ENCODE measurements at regions of chr2 and their contacts with region 1.

Region 1: GRCh38 chr2:203814661-203815540 is 52.7 kb upstream of the CTLA4 start:
- DNase-seq: peak; percentile 53 to 76 (median 72)
- H3K4me3 ChIP-seq: peak overlapping the region in 1 of 2 donors; percentile 21
- H3K4me3 Mint-ChIP-seq: peak overlapping the region; percentile 57 to 86 (median 80)
- H3K27ac ChIP-seq: no peak overlapping the region
- H3K27ac Mint-ChIP-seq: peak overlapping the region; percentile 30 to 86 (median 74)
- H3K4me1 ChIP-seq: peaks cover 49% of the 10 kb centered on the region
- H3K4me1 Mint-ChIP-seq: peaks cover 20 to 54% (median 38%) of the 10 kb centered on the region in 4 donors
- H3K27me3 ChIP-seq: no peaks in the 10 kb centered on the region
- H3K27me3 Mint-ChIP-seq: no peaks in the 10 kb centered on the region

Region 2: DNA sequence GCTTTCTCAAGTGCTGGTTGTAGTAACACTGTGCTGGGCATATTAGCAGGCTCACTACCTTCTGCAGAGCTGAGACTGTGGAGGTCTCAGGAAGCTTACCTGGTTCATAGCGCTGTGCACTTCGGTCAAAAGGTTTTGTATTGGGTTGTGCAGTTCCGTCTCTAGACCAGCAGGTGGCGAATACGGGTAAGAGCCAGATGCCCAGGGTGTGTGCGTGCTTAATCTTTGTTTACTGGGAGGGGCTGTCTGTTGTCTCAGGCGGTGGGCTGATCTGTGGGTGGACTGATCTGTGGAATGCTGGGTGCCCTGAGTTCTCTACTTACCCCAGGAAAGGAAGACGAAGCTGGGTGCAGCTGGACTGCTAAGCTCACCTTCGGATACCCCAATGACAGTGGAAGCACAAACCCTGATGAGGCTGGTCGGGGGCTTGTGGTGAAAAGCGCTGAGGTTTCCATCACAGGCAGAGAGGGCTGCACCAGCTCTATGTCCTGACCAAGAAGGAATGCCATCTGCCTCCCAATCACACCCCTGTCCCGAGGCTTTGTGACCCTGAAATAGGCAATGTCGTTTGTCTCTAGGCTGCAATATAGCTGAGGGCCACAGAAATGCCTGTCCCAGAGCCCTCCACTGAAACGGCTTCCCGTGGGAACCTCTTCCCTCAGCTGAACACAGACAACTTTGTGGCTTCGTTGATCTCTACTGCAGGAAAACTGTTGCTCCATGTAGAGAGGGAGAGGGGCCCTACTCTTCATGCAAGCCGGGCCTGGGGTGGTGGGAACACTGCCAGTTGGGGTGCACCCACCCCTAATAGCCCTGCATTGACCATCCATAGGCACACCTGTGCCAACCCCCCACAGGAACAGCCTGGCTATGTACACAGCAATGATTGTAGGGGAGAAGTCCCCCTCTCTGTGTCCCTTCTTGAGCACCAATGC is 1226.0 kb before region 1 on chr2:
- CTCF ChIA-PET with region 1: interaction called, 8 read pairs
- POLR2A ChIA-PET with region 1: no interaction called
- intact Hi-C with region 1: loop called (anchors 2 kb)
- DNase-seq: peak; percentile 71 to 77 (median 72)
- H3K4me3 ChIP-seq: no peak overlapping the region
- H3K4me3 Mint-ChIP-seq: peak overlapping the region in 2 of 8 donors; percentile 43 to 50
- H3K27ac ChIP-seq: no peak overlapping the region
- H3K27ac Mint-ChIP-seq: peak overlapping the region in 1 of 7 donors; percentile 4
- H3K4me1 ChIP-seq: peaks cover 5% of the 10 kb centered on the region
- H3K4me1 Mint-ChIP-seq: peaks cover 4 to 8% (median 7%) of the 10 kb centered on the region in 4 donors
- H3K27me3 ChIP-seq: no peaks in the 10 kb centered on the region
- H3K27me3 Mint-ChIP-seq: peaks cover 0 to 2% of the 10 kb centered on the region in 2 donors

Region 3: GRCh38 chr2:203453858-203454451 is 360.9 kb before region 1 on chr2:
- CTCF ChIA-PET with region 1: interaction called, 31 read pairs
- POLR2A ChIA-PET with region 1: no interaction called
- intact Hi-C with region 1: loop called (anchors 1 kb)
- DNase-seq: peak; percentile 33 to 44 (median 35)
- H3K4me3 ChIP-seq: no peak overlapping the region
- H3K4me3 Mint-ChIP-seq: no peak overlapping the region
- H3K27ac ChIP-seq: no peak overlapping the region
- H3K27ac Mint-ChIP-seq: no peak overlapping the region
- H3K4me1 ChIP-seq: no peaks in the 10 kb centered on the region
- H3K4me1 Mint-ChIP-seq: no peaks in the 10 kb centered on the region
- H3K27me3 ChIP-seq: no peaks in the 10 kb centered on the region
- H3K27me3 Mint-ChIP-seq: no peaks in the 10 kb centered on the region

Region 4: GRCh38 chr2:203650860-203651613 is 163.9 kb before region 1 on chr2:
- CTCF ChIA-PET with region 1: interaction called, 11 read pairs
- POLR2A ChIA-PET with region 1: no interaction called
- intact Hi-C with region 1: no loop called
- DNase-seq: peak in 4 of 5 donors; percentile 17 to 25 (median 20)
- H3K4me3 ChIP-seq: no peak overlapping the region
- H3K4me3 Mint-ChIP-seq: no peak overlapping the region
- H3K27ac ChIP-seq: no peak overlapping the region
- H3K27ac Mint-ChIP-seq: peak overlapping the region in 1 of 7 donors; percentile 66
- H3K4me1 ChIP-seq: no peaks in the 10 kb centered on the region
- H3K4me1 Mint-ChIP-seq: peaks cover 2 to 16% (median 8%) of the 10 kb centered on the region in 4 donors
- H3K27me3 ChIP-seq: no peaks in the 10 kb centered on the region
- H3K27me3 Mint-ChIP-seq: no peaks in the 10 kb centered on the region

Region 5: GRCh38 chr2:203740780-203741281 is 74.1 kb before region 1 on chr2:
- CTCF ChIA-PET with region 1: interaction called, 17 read pairs
- POLR2A ChIA-PET with region 1: interaction called, 27 read pairs
- intact Hi-C with region 1: no loop called
- DNase-seq: peak; percentile 78 to 88 (median 86)
- H3K4me3 ChIP-seq: peak overlapping the region in 1 of 2 donors; percentile 28
- H3K4me3 Mint-ChIP-seq: peak overlapping the region; percentile 17 to 86 (median 70)
- H3K27ac ChIP-seq: peak overlapping the region; percentile 66
- H3K27ac Mint-ChIP-seq: peak overlapping the region; percentile 81 to 99 (median 95)
- H3K4me1 ChIP-seq: peaks cover 94% of the 10 kb centered on the region
- H3K4me1 Mint-ChIP-seq: peaks cover 65 to 90% (median 79%) of the 10 kb centered on the region in 4 donors
- H3K27me3 ChIP-seq: no peaks in the 10 kb centered on the region
- H3K27me3 Mint-ChIP-seq: no peaks in the 10 kb centered on the region

Region 6: GRCh38 chr2:203804070-203804469 is 10.8 kb before region 1 on chr2:
- CTCF ChIA-PET with region 1: interaction called, 53 read pairs
- POLR2A ChIA-PET with region 1: interaction called, 17 read pairs
- intact Hi-C with region 1: no loop called
- DNase-seq: peak; percentile 36 to 57 (median 50)
- H3K4me3 ChIP-seq: no peak overlapping the region
- H3K4me3 Mint-ChIP-seq: peak overlapping the region; percentile 4 to 81 (median 70)
- H3K27ac ChIP-seq: no peak overlapping the region
- H3K27ac Mint-ChIP-seq: peak overlapping the region; percentile 25 to 95 (median 87)
- H3K4me1 ChIP-seq: peaks cover 51% of the 10 kb centered on the region
- H3K4me1 Mint-ChIP-seq: peaks cover 39 to 73% (median 62%) of the 10 kb centered on the region in 4 donors
- H3K27me3 ChIP-seq: no peaks in the 10 kb centered on the region
- H3K27me3 Mint-ChIP-seq: no peaks in the 10 kb centered on the region

Region 7: DNA sequence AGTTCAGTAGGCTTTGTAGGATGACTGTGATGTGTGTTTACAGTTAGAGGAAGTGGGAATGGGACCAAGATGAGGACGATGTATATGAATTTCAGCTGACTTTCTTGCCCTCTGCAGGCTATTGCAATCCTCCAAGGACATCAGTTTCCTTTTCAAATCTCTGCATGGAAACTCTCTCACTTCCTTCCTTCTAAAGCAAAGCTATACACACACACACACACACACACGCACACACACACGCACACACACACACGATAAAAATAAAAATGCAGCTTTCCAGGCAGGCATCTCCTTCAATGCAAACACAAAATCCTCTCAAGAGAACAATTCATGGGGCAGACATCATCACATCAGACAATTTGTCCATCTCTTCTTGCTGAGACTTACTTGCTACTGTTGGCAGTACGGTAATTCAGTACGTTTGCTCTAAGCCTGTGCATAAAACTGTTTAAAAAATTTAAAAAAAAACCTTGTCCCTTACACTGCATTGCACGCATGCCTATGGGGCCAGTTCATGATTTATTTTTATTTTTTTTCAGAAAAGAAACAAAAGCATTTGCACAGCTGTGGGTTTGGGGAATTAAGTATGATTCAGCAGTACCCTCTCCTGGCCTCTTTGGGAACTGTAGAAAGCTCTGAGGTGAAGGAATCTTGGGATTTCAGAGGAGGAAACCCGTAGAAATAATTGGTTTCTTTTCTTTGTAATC is 94.5 kb after region 1 on chr2:
- CTCF ChIA-PET with region 1: interaction called, 72 read pairs
- POLR2A ChIA-PET with region 1: interaction called, 10 read pairs
- intact Hi-C with region 1: loop called (anchors 1 kb)
- DNase-seq: peak in 4 of 5 donors; percentile 42 to 51 (median 48)
- H3K4me3 ChIP-seq: no peak overlapping the region
- H3K4me3 Mint-ChIP-seq: peak overlapping the region; percentile 9 to 80 (median 69)
- H3K27ac ChIP-seq: no peak overlapping the region
- H3K27ac Mint-ChIP-seq: peak overlapping the region in 3 of 7 donors; percentile 49 to 93 (median 68)
- H3K4me1 ChIP-seq: peaks cover 18% of the 10 kb centered on the region
- H3K4me1 Mint-ChIP-seq: peaks cover 6 to 25% (median 15%) of the 10 kb centered on the region in 4 donors
- H3K27me3 ChIP-seq: no peaks in the 10 kb centered on the region
- H3K27me3 Mint-ChIP-seq: no peaks in the 10 kb centered on the region

Region 8: DNA sequence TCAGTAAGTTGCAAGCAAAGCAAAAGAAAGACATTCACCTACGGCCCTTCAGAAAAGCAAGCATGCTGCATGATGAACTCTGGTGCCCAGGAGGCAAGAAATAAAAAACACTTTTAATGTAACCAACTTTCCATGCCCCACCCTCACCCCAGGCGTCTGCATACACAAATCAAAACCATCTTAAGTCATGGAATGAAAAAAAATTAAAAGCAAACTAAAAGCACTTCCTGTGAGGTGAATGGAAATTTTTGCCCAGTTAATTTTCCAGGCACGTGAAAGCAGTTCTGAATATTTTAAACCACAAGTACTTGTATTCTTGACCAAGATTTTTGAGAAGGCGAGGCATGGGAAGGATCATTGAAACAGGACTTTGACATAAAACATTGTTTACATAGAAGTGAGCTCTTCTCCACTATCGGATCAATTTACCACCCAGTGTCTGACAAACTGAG is 119.2 kb after region 1 on chr2:
- CTCF ChIA-PET with region 1: no interaction called
- POLR2A ChIA-PET with region 1: no interaction called
- intact Hi-C with region 1: no loop called
- DNase-seq: peak in 4 of 5 donors; percentile 40 to 81 (median 58)
- H3K4me3 ChIP-seq: peak overlapping the region; percentile 2 to 41
- H3K4me3 Mint-ChIP-seq: peak overlapping the region; percentile 62 to 91 (median 76)
- H3K27ac ChIP-seq: peak overlapping the region; percentile 53
- H3K27ac Mint-ChIP-seq: peak overlapping the region; percentile 92 to 98 (median 96)
- H3K4me1 ChIP-seq: peaks cover 45% of the 10 kb centered on the region
- H3K4me1 Mint-ChIP-seq: peaks cover 39 to 84% (median 54%) of the 10 kb centered on the region in 4 donors
- H3K27me3 ChIP-seq: no peaks in the 10 kb centered on the region
- H3K27me3 Mint-ChIP-seq: no peaks in the 10 kb centered on the region

Region 9: DNA sequence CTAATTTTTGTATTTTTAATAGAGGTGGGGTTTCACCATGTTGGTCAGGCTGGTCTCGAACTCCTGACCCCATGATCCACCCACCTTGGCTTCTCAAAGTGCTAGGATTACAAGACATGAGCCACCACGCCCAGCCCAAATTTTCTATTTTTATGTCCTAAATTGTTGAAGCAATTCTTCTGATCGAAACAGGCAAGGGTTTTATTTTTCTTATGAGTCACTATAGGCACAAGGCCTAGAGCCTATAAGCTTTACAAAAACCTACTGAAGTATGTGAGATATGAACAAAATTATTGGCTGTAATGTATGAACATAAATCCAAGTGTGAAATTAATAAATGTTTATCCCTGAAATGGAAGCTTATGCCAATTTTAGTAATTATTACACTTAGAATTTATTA is 1403.2 kb after region 1 on chr2:
- CTCF ChIA-PET with region 1: no interaction called
- POLR2A ChIA-PET with region 1: no interaction called
- intact Hi-C with region 1: no loop called
- DNase-seq: no peak
- H3K4me3 ChIP-seq: no peak overlapping the region
- H3K4me3 Mint-ChIP-seq: no peak overlapping the region
- H3K27ac ChIP-seq: no peak overlapping the region
- H3K27ac Mint-ChIP-seq: peak overlapping the region in 1 of 7 donors; percentile 49
- H3K4me1 ChIP-seq: no peaks in the 10 kb centered on the region
- H3K4me1 Mint-ChIP-seq: peaks cover 0 to 3% (median under 1%) of the 10 kb centered on the region in 4 donors
- H3K27me3 ChIP-seq: no peaks in the 10 kb centered on the region
- H3K27me3 Mint-ChIP-seq: peaks cover 0 to 3% of the 10 kb centered on the region in 2 donors